Caco-2 (cell line): ENCODE measurements at regions of chr13 and their contacts with region 1.

Region 1: GRCh38 chr13:110819203-110820014 is 95.5 kb downstream of the ANKRD10 start:
- DNase-seq: peak; percentile 72 to 85
- H3K4me3 ChIP-seq: no peak overlapping the region
- H3K4me3 Mint-ChIP-seq: no peak overlapping the region
- H3K27ac Mint-ChIP-seq: no peak overlapping the region
- H3K4me1 ChIP-seq: 0 out of 2 replicates have a peak, but pooled peaks cover 4% of the 10 kb centered on the region
- H3K4me1 Mint-ChIP-seq: no peaks in the 10 kb centered on the region
- H3K27me3 ChIP-seq: no peaks in the 10 kb centered on the region
- H3K27me3 Mint-ChIP-seq: no peaks in the 10 kb centered on the region
- CTCF ChIP-seq: peak; percentile 95 to 96

Region 2: GRCh38 chr13:110593430-110594130 is 225.8 kb before region 1 on chr13:
- CTCF ChIA-PET with region 1: interaction called, 4 read pairs
- POLR2A ChIA-PET with region 1: no interaction called
- intact Hi-C with region 1: loop called (anchors 1 kb)
- DNase-seq: peak in 1 of 2 experiments; percentile 67
- H3K4me3 ChIP-seq: no peak overlapping the region
- H3K4me3 Mint-ChIP-seq: no peak overlapping the region
- H3K27ac Mint-ChIP-seq: no peak overlapping the region
- H3K4me1 ChIP-seq: peaks cover 12% of the 10 kb centered on the region
- H3K4me1 Mint-ChIP-seq: peaks cover 23% of the 10 kb centered on the region
- H3K27me3 ChIP-seq: no peaks in the 10 kb centered on the region
- H3K27me3 Mint-ChIP-seq: no peaks in the 10 kb centered on the region
- CTCF ChIP-seq: peak; percentile 63 to 64

Region 3: GRCh38 chr13:110680851-110681250 is 138.6 kb before region 1 on chr13:
- CTCF ChIA-PET with region 1: interaction called, 3 read pairs
- POLR2A ChIA-PET with region 1: no interaction called
- intact Hi-C with region 1: loop called (anchors 5 kb)
- DNase-seq: peak in 1 of 2 experiments; percentile 57
- H3K4me3 ChIP-seq: no peak overlapping the region
- H3K4me3 Mint-ChIP-seq: no peak overlapping the region
- H3K27ac Mint-ChIP-seq: no peak overlapping the region
- H3K4me1 ChIP-seq: no peaks in the 10 kb centered on the region; the same call in 1 of the 2 replicates
- H3K4me1 Mint-ChIP-seq: peaks cover 6% of the 10 kb centered on the region
- H3K27me3 ChIP-seq: no peaks in the 10 kb centered on the region
- H3K27me3 Mint-ChIP-seq: no peaks in the 10 kb centered on the region
- CTCF ChIP-seq: peak; percentile 55 to 63